OCI-LY7 (cell line): ENCODE measurements at regions of chr2 and their contacts with region 1.

Region 1: DNA sequence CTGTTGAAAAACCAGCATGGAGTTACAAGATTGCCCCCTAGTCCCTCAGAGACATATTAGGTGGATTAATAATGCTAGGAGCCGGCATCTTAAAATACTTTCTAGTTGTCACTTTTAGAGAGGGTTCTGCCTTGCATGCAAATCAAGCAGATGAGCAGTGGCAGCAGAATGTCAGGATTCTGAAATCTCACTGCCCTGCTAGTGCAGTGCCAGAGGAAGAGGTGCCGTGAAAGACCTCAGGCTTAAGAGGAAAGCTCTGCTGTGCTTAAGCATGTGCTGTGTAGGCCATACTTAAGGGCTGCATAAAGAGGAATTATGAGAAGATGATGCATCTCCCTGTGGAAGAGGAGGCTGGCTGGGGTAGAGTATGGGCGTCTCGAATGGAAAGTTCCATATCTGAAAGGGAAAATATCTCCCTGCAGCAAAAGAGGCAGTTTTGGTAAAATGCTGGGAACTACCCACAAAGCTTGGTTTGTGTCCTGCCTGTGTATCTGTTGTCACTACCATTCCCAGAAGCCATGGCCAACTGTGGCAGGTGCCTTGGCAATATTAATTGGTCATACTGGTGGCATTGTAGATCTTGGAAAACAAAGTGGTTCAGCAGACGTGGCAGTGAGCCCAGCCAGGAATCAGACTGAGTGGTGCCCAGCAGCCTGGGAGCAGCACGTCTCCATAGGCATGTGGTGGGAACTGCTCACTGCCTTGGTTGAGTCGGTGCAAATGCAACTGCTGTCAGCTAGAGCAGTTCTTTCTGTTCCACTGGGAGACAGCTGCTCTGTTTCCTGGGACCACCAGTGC is 131.9 kb downstream of the EVA1A start:
- DNase-seq: peak; percentile 37
- H3K4me3 ChIP-seq: no peak overlapping the region
- H3K27ac ChIP-seq: no peak overlapping the region
- H3K4me1 ChIP-seq: peaks cover 57% of the 10 kb centered on the region
- CTCF ChIP-seq: no peak

Region 2: GRCh38 chr2:75416420-75417342 is 12.2 kb before region 1 on chr2:
- CTCF ChIA-PET with region 1: no interaction called
- POLR2A ChIA-PET with region 1: interaction called, 35 read pairs
- intact Hi-C with region 1: no loop called
- DNase-seq: peak; percentile 69
- H3K4me3 ChIP-seq: peak overlapping the region; percentile 56
- H3K27ac ChIP-seq: peak overlapping the region; percentile 18
- H3K4me1 ChIP-seq: peaks cover 15% of the 10 kb centered on the region
- CTCF ChIP-seq: no peak

Region 3: DNA sequence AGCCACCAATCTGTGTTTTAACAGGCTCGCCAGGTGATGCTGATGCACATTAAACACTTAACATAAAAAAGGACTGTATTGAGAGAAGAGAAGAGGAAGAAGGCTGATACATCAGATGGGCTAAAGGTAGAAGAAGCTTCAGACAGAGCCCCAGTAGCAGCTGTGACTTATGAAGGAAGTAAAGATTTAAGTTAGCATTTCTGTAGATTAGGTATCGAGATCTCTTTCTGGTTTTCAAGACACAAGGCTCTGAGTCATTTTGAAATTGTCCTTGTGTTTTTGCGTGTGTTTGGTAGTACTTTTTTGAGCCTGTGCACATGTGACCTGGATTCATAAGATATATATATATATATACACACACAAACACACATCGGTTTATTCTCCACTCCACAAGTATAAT is 322.5 kb after region 1 on chr2:
- CTCF ChIA-PET with region 1: no interaction called
- POLR2A ChIA-PET with region 1: no interaction called
- intact Hi-C with region 1: no loop called
- DNase-seq: no peak
- H3K4me3 ChIP-seq: no peak overlapping the region
- H3K27ac ChIP-seq: no peak overlapping the region
- H3K4me1 ChIP-seq: no peaks in the 10 kb centered on the region
- CTCF ChIP-seq: no peak